Heart right ventricle (tissue), 16 donors: ENCODE measurements at regions of chr3 and their contacts with region 1.

Region 1: DNA sequence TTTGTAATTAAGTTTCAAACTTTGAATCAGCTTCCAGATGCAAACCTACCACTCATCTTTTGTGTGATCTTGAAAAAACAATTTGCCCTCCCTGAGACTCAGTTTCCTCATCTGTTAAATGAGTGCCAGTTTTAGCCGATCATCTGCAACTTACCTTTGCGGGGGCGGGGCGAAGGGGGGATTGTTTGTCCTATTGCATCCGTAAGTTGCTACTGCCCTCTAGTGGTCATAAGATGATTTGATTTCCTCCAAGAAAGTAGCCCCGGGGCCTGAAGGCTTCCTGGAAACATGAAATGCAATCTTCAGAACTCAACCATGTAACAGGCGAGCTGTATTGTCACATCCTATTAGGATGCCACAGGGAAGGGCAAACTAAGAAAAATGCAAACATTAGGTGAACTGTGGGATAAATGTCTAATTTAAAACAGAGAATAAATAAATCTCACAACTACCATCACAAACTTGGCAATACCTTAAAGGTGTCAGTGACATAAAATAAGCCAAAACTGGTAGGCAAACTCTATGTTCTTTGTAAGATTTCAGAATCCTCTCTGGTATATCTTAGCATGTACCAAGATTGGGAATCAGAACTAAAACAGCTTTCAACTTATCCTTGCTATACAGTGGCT is 63.5 kb upstream of the CLDN18 start:
- DNase-seq: peak; percentile 23 to 25
- ATAC-seq: peak in 1 of 8 donors; percentile 42
- H3K4me3 ChIP-seq: no peak overlapping the region
- H3K27ac ChIP-seq: no peak overlapping the region
- H3K4me1 ChIP-seq: no peaks in the 10 kb centered on the region
- H3K27me3 ChIP-seq: no peaks in the 10 kb centered on the region
- CTCF ChIP-seq: peak; percentile 41 to 72 (median 64)

Region 2: DNA sequence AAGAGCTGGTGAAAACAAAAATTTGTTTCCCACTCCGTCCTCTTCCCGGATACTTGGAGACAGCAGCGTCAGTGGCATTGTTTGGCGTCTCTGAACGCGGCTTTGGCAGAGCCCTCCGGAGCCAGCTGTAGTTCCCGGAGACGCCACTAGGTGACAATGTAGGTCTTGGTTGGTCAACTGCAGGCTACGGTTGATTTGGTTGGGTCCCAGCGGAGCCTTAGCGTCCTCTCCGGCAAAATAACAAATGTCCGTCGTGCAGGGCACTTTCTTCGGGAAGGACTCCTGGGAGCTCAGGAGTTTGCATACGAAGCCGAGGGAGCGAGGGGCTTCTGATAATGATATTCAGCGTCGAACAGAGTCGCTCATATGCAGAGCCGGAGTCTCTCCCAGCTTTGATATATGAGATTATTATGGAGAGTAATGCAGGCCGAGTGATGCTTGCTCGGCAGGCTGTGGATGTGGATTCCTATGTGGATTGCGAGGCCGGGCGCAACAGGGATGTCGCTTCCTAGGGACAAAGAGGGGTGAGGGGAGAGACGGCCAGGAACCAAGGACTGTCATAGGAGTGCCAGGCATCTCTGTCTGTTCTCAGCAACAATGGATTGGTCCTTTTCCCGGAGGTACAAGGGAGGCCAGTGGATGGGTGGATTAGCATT is 913.9 kb before region 1 on chr3:
- intact Hi-C with region 1: loop called in 7 of 10 experiments (anchors 5 to 10 kb)
- DNase-seq: peak; percentile 86 to 90
- ATAC-seq: peak; percentile 86 to 94 (median 89)
- H3K4me3 ChIP-seq: peak overlapping the region in 8 of 10 donors; percentile 18 to 50 (median 44)
- H3K27ac ChIP-seq: no peak overlapping the region
- H3K4me1 ChIP-seq: peaks cover 0 to 10% (median 6%) of the 10 kb centered on the region in 9 donors
- H3K27me3 ChIP-seq: peaks cover 0 to 27% (median 7%) of the 10 kb centered on the region in 7 donors
- CTCF ChIP-seq: peak; percentile 90 to 99 (median 98)